Heart left ventricle (tissue), 16 donors: ENCODE measurements at regions of chr15 and their contacts with region 1.

Region 1: DNA sequence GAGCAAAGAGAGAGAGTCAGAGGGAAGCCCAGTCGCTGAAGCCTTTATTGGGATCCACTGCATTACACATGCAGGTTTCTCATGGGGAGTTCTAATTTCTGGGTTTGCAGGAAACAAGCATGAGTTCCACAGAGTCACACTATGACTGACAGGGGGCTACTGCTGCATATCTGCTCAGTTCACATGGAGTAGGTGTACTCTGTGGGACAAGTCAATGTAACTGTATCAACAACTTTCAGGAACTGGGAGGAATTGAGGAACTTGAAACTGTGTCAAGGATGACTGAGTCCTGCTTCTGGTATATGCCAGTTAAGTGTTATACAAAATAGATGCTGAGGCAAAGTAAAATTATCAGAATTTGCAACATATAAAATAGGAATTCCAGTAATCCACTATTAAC is 110.8 kb downstream of the NPAP1 start:
- DNase-seq: no peak
- ATAC-seq: no peak
- H3K4me3 ChIP-seq: no peak overlapping the region
- H3K27ac ChIP-seq: no peak overlapping the region
- H3K4me1 ChIP-seq: no peaks in the 10 kb centered on the region
- H3K27me3 ChIP-seq: peaks cover 0 to 9% (median 0%) of the 10 kb centered on the region in 9 donors
- CTCF ChIP-seq: no peak
- POLR2A ChIP-seq: no peak

Region 2: GRCh38 chr15:24734391-24734790 is 52.0 kb before region 1 on chr15:
- intact Hi-C with region 1: loop called in 1 of 10 experiments (anchors 10 kb)
- DNase-seq: no peak
- ATAC-seq: no peak
- H3K4me3 ChIP-seq: no peak overlapping the region
- H3K27ac ChIP-seq: no peak overlapping the region
- H3K4me1 ChIP-seq: no peaks in the 10 kb centered on the region
- H3K27me3 ChIP-seq: no peaks in the 10 kb centered on the region
- CTCF ChIP-seq: no peak
- POLR2A ChIP-seq: no peak

Region 3: DNA sequence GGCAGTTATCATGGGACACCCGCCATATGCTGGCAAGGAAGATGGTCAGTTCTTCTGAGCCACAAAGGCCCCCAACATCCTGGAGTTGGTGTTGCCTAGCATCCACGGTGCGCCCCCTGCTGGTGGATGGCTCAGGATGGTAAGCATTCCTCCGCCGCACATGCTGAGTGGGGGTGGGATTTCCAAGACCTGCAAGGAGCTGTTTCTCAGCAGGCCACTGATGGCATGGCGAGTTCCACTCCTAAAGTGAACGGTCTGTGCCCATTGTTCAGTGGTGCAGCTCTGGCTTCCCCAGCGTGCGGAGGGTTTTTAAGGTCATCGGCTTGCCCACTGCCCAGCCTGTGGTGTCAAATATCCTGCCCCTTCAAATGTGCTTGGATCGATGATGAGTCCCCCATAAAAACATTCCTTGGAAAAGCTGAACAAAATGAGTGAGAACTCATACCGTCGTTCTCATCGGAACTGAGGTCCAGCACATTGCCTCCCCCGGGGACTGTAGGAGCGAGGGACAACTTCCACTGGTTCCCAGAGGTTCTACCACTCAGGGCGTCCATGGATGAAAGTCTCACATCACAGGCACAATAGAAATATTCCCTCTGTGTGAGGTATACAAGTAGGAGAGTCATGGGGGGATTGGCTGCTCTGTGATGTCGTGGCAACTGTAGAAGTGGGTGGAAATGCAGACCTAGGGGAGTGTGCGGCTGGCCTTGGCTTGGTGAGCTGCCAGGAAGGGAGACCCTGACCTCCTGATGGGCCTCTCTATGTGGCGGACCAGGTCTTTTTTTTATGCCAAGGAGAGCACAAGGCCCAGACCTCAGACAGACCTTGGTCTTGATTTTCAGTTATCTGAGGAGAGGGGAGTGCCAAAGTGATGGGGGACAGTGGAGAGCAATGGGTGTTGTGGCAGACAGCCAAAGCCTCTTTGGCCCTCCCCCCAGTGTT is 270.4 kb after region 1 on chr15:
- intact Hi-C with region 1: no loop called
- DNase-seq: no peak
- ATAC-seq: no peak
- H3K4me3 ChIP-seq: no peak overlapping the region
- H3K27ac ChIP-seq: no peak overlapping the region
- H3K4me1 ChIP-seq: no peaks in the 10 kb centered on the region
- H3K27me3 ChIP-seq: no peaks in the 10 kb centered on the region
- CTCF ChIP-seq: peak in 2 of 12 donors; percentile 6 to 7
- POLR2A ChIP-seq: no peak